Right cardiac atrium (tissue), 5 donors: ENCODE measurements at regions of chr22 and their contacts with region 1.

Region 1: DNA sequence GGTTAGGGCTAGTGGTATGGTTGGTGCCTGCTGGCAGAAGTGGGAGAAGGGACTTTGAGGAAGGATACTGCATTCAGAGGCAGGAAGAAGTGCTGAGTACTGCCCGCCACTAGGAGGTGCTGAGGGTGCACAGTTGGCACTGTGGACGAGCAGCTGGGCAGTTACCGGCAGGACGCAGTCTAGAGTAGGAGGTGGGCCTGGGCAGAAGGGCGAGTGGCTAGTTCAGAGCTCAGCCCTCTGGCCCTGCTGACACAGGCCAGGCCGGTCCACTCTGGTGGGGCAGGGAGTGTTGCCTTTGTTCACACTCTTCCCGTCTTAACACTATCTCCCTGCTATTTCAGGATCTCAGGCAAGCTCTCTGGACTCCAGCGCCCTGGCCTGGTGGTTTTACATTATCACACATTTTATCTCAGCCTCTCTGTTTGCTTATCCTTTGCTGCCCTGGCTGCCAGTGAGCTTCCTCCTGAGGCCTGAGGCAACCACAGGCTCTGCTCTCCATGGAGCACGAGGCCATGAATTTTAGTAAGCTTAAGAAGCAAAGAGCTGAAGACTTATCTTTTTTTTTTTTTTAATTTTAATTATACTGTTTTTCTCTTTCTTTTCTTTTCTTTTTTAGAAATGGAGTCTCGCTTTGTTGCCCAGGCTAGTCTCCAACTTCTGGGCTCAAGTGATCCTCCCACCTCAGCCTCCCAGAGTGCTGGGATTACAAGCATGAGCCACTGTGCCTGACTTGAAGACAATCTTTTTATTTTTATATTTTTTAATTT is 26.9 kb downstream of the SNAP29 start:
- DNase-seq: peak; percentile 82 to 90 (median 90)
- ATAC-seq: peak; percentile 95
- H3K4me3 ChIP-seq: no peak overlapping the region
- H3K27ac ChIP-seq: peak overlapping the region; percentile 71
- H3K4me1 ChIP-seq: no peaks in the 10 kb centered on the region
- H3K27me3 ChIP-seq: no peaks in the 10 kb centered on the region

Region 2: GRCh38 chr22:21014202-21014725 is 128.5 kb after region 1 on chr22:
- intact Hi-C with region 1: loop called in 1 of 4 experiments (anchors 10 kb)
- DNase-seq: peak; percentile 94 to 98 (median 98)
- ATAC-seq: peak; percentile 93 to 94
- H3K4me3 ChIP-seq: peak overlapping the region; percentile 19
- H3K27ac ChIP-seq: peak overlapping the region; percentile 22
- H3K4me1 ChIP-seq: peaks cover 10% of the 10 kb centered on the region
- H3K27me3 ChIP-seq: no peaks in the 10 kb centered on the region